ENCODE measurements at regions of chr2 and their contacts with region 1.

Region 1: GRCh38 chr2:26178246-26178645 is 5.4 kb downstream of the GAREM2 start:
- DNase-seq: no peak
- H3K4me3 ChIP-seq: peak overlapping the region; percentile 55
- H3K27me3 ChIP-seq: peaks cover 11% of the 10 kb centered on the region
- CTCF ChIP-seq: no peak

Region 2: GRCh38 chr2:26345545-26346453 is 167.6 kb after region 1 on chr2 and contains the start of gene SELENOI:
- CTCF ChIA-PET with region 1: interaction called, 3 read pairs
- POLR2A ChIA-PET with region 1: interaction called, 11 read pairs
- DNase-seq: peak; percentile 93
- H3K4me3 ChIP-seq: peak within 1 kb of the TSS; percentile 84
- H3K27me3 ChIP-seq: no peaks in the 10 kb centered on the region
- CTCF ChIP-seq: no peak
- polyA plus RNA-seq, gene SELENOI: 9.5 and 11.1 TPM in 2 replicates

Measured in BJ (cell line).